HEK293T (cell line): ENCODE measurements at regions of chr17 and their contacts with region 1.

Region 1: GRCh38 chr17:80477647-80478478 is 1.5 kb upstream of the NPTX1 start:
- DNase-seq: peak; percentile 56

Region 2: DNA sequence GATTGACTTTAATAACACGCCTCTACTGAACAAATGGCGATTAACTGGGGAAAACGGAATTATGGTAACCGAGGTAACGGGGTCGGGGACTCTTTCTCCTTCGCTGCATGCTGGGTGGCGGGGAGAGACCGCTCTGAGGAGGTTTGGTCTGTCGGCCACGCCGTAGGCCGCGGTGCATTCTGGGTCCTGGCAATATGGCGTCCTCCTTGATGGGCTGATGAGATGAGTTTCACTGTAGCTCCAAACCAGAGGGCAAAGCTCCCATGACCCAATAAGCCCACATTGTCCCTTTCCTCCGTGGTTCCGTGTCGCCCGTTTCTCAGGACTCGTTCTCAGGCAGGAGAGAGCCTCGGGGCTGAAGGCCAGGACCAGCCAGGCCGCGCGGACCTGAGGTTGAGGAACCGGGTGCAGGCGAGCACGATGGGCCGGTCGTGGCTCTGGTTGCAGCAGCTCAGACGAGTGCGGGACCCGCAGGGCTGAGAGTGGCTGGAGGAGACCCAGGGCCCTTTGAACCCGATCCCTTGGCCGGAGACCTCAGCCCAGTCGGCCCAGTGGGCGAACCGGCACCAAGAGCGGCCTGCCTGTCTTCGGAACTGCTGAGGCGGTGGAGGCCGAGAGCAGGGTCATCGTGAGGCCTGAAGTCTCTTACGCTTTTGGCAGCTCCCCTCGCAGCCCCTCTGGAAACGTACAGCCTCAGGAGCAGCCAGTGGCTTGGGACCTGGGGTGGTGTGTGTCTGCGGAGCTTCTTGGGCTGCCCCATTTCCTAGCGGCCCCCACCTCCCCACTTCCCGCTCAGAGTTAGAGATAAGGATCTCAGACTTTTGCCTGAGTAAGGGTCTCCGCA is 67.0 kb after region 1 on chr17 and contains the start of gene RPTOR:
- CTCF ChIA-PET with region 1: no interaction called
- POLR2A ChIA-PET with region 1: interaction called, 11 read pairs
- DNase-seq: peak; percentile 93